Right ventricle myocardium inferior (tissue), 1 donor: ENCODE measurements at regions of chr19 and their contacts with region 1.

Region 1: GRCh38 chr19:55209693-55210472 is 582 bp upstream of the PTPRH start:
- DNase-seq: no peak
- ATAC-seq: no peak

Region 2: DNA sequence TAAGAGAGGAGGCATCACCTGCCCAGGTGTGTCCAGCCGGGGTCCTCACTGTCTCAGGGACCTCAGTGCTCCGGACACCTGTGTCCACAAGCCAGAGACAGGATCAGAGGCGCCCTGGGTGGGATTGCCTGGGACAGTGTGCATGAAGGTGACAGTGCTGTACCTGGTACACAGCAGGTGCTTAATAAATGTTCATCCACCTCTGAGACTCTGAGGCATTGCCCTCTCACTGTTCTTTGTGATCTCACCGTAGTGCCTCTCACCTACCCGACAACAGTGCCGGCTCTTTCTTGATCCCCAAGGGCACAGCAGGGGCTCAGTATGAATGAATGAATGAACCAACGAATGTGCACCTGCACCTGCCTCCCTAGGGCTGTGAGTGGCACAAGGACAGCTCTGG is 156.1 kb before region 1 on chr19:
- intact Hi-C with region 1: no loop called
- DNase-seq: no peak
- ATAC-seq: no peak

Region 3: GRCh38 chr19:55160128-55160985 is 49.5 kb before region 1 on chr19:
- intact Hi-C with region 1: loop called (anchors 2 kb)
- DNase-seq: peak; percentile 91
- ATAC-seq: peak; percentile 54

Region 4: DNA sequence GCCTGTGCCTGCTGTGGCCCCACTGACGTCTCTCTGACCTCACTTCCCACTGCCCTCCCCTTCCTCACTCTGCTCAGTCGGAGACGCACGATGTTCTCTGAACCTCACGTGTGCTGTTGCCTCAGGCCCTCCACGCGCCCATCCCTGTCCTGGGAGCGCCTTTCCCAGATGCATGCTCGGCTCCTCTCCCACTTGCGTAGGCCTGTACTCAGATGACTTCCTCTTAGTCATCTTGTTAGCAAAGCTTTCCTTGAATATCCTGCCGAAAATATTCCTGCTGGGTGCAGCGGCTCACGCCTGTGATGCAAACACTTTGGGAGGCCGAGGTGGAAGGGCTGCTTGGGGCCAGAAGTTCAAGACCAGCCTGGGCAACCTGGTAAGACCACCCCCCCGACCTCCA is 20.5 kb before region 1 on chr19:
- intact Hi-C with region 1: no loop called
- DNase-seq: no peak
- ATAC-seq: peak; percentile 44

Region 5: GRCh38 chr19:55258476-55258827 is 48.6 kb after region 1 on chr19:
- intact Hi-C with region 1: no loop called
- DNase-seq: no peak
- ATAC-seq: peak; percentile 11